ENCODE measurements at regions of chr12 and their contacts with region 1.

Region 1: DNA sequence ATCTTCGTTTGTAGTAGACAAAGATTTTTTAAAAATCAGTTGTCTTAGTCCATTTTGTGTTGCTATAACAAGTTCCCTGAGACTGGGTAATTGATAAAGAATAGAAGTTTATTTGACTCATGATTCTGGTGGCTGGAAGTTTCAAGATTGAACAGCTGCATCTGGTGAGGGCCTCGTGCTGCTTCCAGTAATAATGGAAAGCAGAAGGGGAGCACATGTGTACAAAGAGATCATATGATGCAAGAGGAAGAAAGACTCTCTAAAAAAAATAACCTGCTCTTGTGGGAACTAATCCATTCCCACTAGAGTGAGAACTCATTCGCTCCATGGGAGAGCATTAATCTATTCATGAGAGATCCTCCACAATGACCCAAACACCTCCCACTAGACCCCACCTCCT is 24.8 kb downstream of the MUCL1 start:
- DNase-seq: no peak
- H3K4me3 ChIP-seq: no peak overlapping the region
- H3K27ac ChIP-seq: no peak overlapping the region
- H3K4me1 ChIP-seq: no peaks in the 10 kb centered on the region
- H3K27me3 ChIP-seq: peaks cover 0 to 3% of the 10 kb centered on the region in 2 experiments
- CTCF ChIP-seq: no peak
- POLR2A ChIP-seq: no peak

Region 2: DNA sequence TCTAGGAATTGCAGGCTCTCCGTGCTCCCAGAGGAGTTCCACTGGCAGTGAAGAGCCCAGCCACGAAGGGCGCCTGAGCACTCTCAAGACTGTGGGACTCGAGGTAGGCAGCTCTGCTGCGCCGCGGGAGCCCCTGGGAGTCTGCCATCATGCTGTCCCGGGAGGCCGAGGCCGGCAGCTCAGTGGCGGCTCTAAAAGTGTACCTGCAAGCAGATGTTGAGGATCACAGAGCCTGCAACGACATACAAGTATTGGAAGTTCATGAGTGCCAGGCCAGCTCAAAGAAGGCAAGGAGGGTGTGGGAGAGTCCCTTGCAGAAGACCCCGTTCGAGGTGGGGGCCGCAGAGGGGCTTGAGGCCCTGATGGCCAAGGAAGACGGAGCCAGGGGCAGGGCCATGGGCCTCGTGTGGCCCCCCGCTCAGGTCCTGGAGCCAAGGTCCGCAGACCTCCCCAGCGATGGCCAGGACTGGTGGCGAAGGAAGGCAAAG is 37.9 kb after region 1 on chr12:
- CTCF ChIA-PET with region 1: no interaction called
- POLR2A ChIA-PET with region 1: no interaction called
- dilution Hi-C with region 1: no loop called
- intact Hi-C with region 1: loop called (anchors 5 kb)
- DNase-seq: no peak
- H3K4me3 ChIP-seq: no peak overlapping the region
- H3K27ac ChIP-seq: no peak overlapping the region
- H3K4me1 ChIP-seq: no peaks in the 10 kb centered on the region
- H3K27me3 ChIP-seq: peaks cover 0 to 3% of the 10 kb centered on the region in 2 experiments
- CTCF ChIP-seq: no peak
- POLR2A ChIP-seq: no peak

Region 3: DNA sequence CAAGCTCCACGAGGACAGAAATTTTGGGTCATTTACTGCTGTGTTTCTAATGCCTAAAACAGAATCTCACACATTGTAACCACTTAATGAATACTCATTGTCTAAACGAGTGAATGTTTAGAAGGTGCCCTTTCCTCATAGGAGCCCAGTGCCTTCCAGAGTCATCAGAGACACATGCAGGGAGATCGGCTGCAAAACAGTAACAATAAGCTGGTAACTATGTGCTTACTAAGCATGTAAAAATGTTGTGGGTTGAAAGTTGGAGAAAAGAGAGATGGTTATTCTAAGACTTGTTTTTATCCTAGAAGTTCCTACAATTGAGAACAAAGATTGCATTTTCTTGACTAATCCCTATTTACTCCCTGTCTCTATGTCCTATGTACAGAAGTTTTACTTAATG is 98.0 kb after region 1 on chr12:
- CTCF ChIA-PET with region 1: no interaction called
- POLR2A ChIA-PET with region 1: no interaction called
- dilution Hi-C with region 1: no loop called
- intact Hi-C with region 1: no loop called
- DNase-seq: no peak
- H3K4me3 ChIP-seq: no peak overlapping the region
- H3K27ac ChIP-seq: no peak overlapping the region
- H3K4me1 ChIP-seq: no peaks in the 10 kb centered on the region
- H3K27me3 ChIP-seq: peaks cover 1 to 15% of the 10 kb centered on the region in 2 experiments
- CTCF ChIP-seq: no peak
- POLR2A ChIP-seq: no peak